ENCODE measurements at regions of chr15 and their contacts with region 1.

Region 1: GRCh38 chr15:61916104-61916503 is 144.1 kb downstream of the VPS13C start:
- DNase-seq: peak in 1 of 2 donors; percentile 21
- ATAC-seq: peak in 7 of 8 donors; percentile 56 to 89 (median 81)
- H3K4me3 ChIP-seq: no peak overlapping the region
- H3K27ac ChIP-seq: peak overlapping the region in 4 of 10 donors; percentile 11 to 49 (median 22)
- H3K4me1 ChIP-seq: peaks cover 0 to 11% (median 0%) of the 10 kb centered on the region in 9 donors
- H3K27me3 ChIP-seq: no peaks in the 10 kb centered on the region
- CTCF ChIP-seq: no peak

Region 2: DNA sequence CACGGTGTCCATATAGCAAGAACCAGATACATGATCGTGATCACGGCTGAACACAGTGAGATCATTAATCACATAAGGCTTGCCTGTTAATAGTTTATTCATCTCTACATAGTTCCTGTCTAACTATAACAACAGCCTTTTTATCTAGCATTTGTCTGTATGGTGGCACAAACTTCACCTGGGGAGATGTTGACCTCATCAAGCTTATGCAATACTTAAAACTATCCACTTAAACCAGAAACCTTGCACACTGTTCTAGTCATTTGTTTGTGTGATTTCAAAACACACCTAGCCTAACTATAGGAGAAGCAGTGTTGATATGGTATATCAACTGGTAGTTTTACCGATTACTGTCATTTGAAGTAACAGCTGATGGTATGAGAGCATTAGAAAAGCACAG is 19.4 kb after region 1 on chr15:
- intact Hi-C with region 1: loop called in 1 of 10 experiments (anchors 2 kb)
- DNase-seq: no peak
- ATAC-seq: no peak
- H3K4me3 ChIP-seq: no peak overlapping the region
- H3K27ac ChIP-seq: no peak overlapping the region
- H3K4me1 ChIP-seq: no peaks in the 10 kb centered on the region
- H3K27me3 ChIP-seq: no peaks in the 10 kb centered on the region
- CTCF ChIP-seq: no peak

Region 3: GRCh38 chr15:61974759-61975158 is 58.7 kb after region 1 on chr15:
- intact Hi-C with region 1: loop called in 1 of 10 experiments (anchors 10 kb)
- DNase-seq: no peak
- ATAC-seq: peak in 7 of 8 donors; percentile 43 to 86 (median 80)
- H3K4me3 ChIP-seq: no peak overlapping the region
- H3K27ac ChIP-seq: peak overlapping the region in 6 of 10 donors; percentile 7 to 56 (median 40)
- H3K4me1 ChIP-seq: peaks cover 0 to 21% (median 12%) of the 10 kb centered on the region in 9 donors
- H3K27me3 ChIP-seq: no peaks in the 10 kb centered on the region
- CTCF ChIP-seq: no peak